ENCODE measurements at regions of chr3 and their contacts with region 1.

Region 1: DNA sequence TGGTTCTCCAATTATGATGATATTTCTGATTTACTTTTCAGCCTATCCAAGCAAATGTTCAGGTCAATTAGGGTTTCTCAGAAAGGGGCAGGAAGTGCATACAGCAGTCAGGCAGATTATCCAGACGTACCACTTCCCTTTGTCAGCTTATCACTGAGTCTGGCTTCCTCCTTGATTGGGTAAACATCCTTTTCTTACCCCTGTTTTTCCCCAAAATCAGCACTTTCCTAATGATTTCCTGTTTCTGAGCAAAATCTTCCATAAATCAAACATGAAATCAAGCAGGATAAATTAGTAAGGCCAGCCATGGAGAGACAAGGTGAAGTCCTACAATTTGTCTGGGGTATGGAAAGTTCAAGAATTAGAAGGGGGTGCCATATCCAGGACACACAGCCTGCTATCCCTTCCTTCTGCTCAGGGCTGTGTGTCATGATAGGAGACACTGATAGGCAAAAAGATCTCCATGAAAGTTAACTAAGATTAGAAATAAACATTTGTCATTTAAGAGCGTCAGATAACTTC is 29.0 kb downstream of the ADIPOQ start:
- DNase-seq: peak in 2 of 5 donors; percentile 18 to 21
- H3K4me3 ChIP-seq: no peak overlapping the region
- H3K4me3 Mint-ChIP-seq: peak overlapping the region in 6 of 8 donors; percentile 21 to 66 (median 56)
- H3K27ac ChIP-seq: no peak overlapping the region
- H3K27ac Mint-ChIP-seq: peak overlapping the region; percentile 23 to 96 (median 85)
- H3K4me1 ChIP-seq: peaks cover 20% of the 10 kb centered on the region
- H3K4me1 Mint-ChIP-seq: peaks cover 16 to 32% (median 23%) of the 10 kb centered on the region in 4 donors
- H3K27me3 ChIP-seq: no peaks in the 10 kb centered on the region
- H3K27me3 Mint-ChIP-seq: no peaks in the 10 kb centered on the region

Region 2: GRCh38 chr3:186653080-186653707 is 218.3 kb before region 1 on chr3:
- CTCF ChIA-PET with region 1: no interaction called
- POLR2A ChIA-PET with region 1: no interaction called
- intact Hi-C with region 1: no loop called
- DNase-seq: no peak
- H3K4me3 ChIP-seq: no peak overlapping the region
- H3K4me3 Mint-ChIP-seq: no peak overlapping the region
- H3K27ac ChIP-seq: no peak overlapping the region
- H3K27ac Mint-ChIP-seq: no peak overlapping the region
- H3K4me1 ChIP-seq: no peaks in the 10 kb centered on the region
- H3K4me1 Mint-ChIP-seq: no peaks in the 10 kb centered on the region
- H3K27me3 ChIP-seq: no peaks in the 10 kb centered on the region
- H3K27me3 Mint-ChIP-seq: peaks cover 3 to 16% of the 10 kb centered on the region in 2 donors

Region 3: GRCh38 chr3:186882881-186883685 is 11.6 kb after region 1 on chr3:
- CTCF ChIA-PET with region 1: interaction called, 4 read pairs
- POLR2A ChIA-PET with region 1: interaction called, 10 read pairs
- intact Hi-C with region 1: no loop called
- DNase-seq: no peak
- H3K4me3 ChIP-seq: no peak overlapping the region
- H3K4me3 Mint-ChIP-seq: peak overlapping the region in 6 of 8 donors; percentile 17 to 77 (median 39)
- H3K27ac ChIP-seq: no peak overlapping the region
- H3K27ac Mint-ChIP-seq: peak overlapping the region in 5 of 7 donors; percentile 11 to 26 (median 17)
- H3K4me1 ChIP-seq: peaks cover 45% of the 10 kb centered on the region
- H3K4me1 Mint-ChIP-seq: peaks cover 30 to 55% (median 40%) of the 10 kb centered on the region in 4 donors
- H3K27me3 ChIP-seq: no peaks in the 10 kb centered on the region
- H3K27me3 Mint-ChIP-seq: no peaks in the 10 kb centered on the region